Psoas muscle (tissue), 8 donors: ENCODE measurements at regions of chr4 and their contacts with region 1.

Region 1: GRCh38 chr4:128287871-128288688 is 467 bp upstream of the PGRMC2 start:
- DNase-seq: peak; percentile 99 to 100
- ATAC-seq: peak; percentile 91 to 94 (median 92)
- H3K4me3 ChIP-seq: peak overlapping the region; percentile 87
- H3K27ac ChIP-seq: peak overlapping the region; percentile 95
- H3K4me1 ChIP-seq: peaks cover 28% of the 10 kb centered on the region
- H3K27me3 ChIP-seq: no peaks in the 10 kb centered on the region
- CTCF ChIP-seq: peak; percentile 25

Region 2: DNA sequence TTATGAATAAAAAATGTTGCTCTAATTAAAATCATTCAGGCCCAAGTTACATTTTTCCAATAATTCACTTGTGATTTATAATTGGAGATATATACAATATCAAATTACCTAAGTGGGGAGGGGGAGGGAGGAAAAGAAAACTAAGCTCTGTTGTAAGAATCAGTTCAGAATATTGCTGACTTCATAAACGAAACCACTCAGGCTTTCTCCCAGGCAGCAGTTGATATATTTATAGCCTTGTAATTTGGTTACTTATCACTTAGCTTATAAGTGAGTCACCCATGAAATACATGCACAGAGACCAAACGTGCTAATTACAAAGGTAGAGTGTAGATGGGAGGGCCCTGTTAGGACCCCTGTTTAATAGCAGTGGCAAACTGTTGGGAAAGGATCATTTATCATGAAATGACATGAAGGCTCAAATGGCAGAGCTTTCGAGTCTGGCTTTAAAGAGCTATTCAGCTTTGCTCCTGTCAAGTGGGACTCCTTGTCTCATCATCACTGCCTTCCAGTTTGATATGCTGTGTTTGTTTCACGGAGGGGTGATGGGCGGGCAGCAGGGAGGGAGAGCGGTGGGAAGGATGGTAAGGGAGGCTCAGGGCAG is 105.1 kb after region 1 on chr4:
- intact Hi-C with region 1: loop called in 1 of 2 experiments (anchors 5 kb)
- DNase-seq: no peak
- ATAC-seq: peak; percentile 49 to 75 (median 64)
- H3K4me3 ChIP-seq: peak overlapping the region; percentile 17
- H3K27ac ChIP-seq: peak overlapping the region; percentile 84
- H3K4me1 ChIP-seq: peaks cover 59% of the 10 kb centered on the region
- H3K27me3 ChIP-seq: no peaks in the 10 kb centered on the region
- CTCF ChIP-seq: no peak

Region 3: DNA sequence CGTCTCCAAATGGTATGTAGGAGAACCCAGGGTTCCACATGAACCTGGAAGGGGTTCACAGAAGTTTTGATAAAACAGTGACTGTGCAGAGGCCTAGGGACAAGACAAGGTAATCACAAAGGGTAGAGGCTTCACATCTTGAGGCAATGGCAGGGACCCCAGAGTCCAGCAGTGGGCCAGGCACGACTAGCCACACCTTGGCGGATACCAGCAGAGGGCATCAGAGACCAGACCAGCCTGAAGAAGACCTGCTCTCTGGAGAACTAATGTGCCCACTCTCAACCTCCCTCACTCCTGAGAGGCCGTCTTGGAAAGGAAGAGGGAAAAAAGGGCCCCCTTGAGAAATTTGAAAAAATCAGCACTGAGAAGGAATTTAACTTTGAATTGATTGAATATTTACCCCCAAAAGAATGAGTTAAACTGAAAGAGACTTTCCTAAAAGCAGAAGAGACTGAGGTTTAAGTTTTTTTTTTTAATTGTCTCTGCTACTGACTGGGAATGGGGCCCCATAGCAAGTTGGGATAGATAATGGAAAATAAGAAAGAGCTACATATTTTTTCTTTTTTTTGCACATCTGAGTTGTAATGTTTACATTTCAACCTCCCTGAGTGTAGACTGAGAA is 277.6 kb after region 1 on chr4:
- intact Hi-C with region 1: loop called in 1 of 2 experiments (anchors 10 kb)
- DNase-seq: peak; percentile 30 to 56
- ATAC-seq: peak; percentile 58 to 80 (median 71)
- H3K4me3 ChIP-seq: no peak overlapping the region
- H3K27ac ChIP-seq: no peak overlapping the region
- H3K4me1 ChIP-seq: peaks cover 4% of the 10 kb centered on the region
- H3K27me3 ChIP-seq: no peaks in the 10 kb centered on the region
- CTCF ChIP-seq: peak; percentile 42

Region 4: GRCh38 chr4:128809477-128810330 is 521.6 kb after region 1 on chr4 and contains the start of gene JADE1:
- intact Hi-C with region 1: loop called in 1 of 2 experiments (anchors 10 kb)
- DNase-seq: peak; percentile 88 to 93
- ATAC-seq: peak; percentile 57 to 70 (median 66)
- H3K4me3 ChIP-seq: peak within 1 kb of the TSS; percentile 85
- H3K27ac ChIP-seq: peak within 1 kb of the TSS; percentile 97
- H3K4me1 ChIP-seq: peaks cover 8% of the 10 kb centered on the region
- H3K27me3 ChIP-seq: no peaks in the 10 kb centered on the region
- CTCF ChIP-seq: no peak
- total RNA-seq, gene JADE1: 16.8 to 21.4 (median 19.0) TPM

Region 5: DNA sequence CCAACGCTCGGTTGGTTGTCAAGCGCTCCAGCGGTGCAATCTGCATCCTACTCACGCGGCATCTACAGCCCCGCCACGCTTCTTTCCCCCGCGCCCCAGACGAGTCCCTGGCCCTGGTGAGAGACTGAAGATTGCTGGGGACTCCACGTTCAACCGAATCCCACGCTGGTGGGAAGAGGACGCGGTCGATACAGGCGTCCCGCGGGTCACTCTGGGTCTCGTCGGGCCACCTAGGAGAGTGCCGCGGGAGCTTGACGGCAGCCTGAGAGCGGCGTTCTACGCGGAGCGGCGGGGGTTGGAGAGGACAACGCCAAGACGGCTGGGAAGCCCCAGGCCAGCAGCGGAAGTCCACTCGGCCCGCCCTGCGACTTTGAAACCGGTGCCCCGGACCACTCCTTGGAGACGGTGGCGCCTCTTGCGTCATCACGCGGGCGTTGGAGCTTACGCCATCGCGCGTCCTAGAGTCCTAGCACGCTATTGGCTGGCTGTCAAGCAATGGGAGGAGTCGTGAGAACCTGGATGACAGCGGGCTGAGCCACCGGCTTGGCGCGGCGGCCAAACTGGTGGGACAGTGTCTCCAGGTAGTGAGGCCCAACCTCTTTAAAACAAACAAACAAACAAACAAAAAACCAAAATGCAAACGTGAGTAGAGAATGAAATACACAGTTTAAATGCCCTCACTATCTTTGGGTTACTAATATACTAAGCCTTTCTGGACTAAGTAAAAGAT is 805.3 kb after region 1 on chr4 and contains the start of gene SCLT1:
- intact Hi-C with region 1: loop called in 1 of 2 experiments (anchors 5 kb)
- DNase-seq: peak; percentile 99
- ATAC-seq: peak; percentile 98 to 99 (median 98)
- H3K4me3 ChIP-seq: peak within 1 kb of the TSS; percentile 84
- H3K27ac ChIP-seq: peak within 1 kb of the TSS; percentile 94
- H3K4me1 ChIP-seq: peaks cover 29% of the 10 kb centered on the region
- H3K27me3 ChIP-seq: no peaks in the 10 kb centered on the region
- CTCF ChIP-seq: no peak
- total RNA-seq, gene SCLT1: 3.1 to 5.3 (median 4.4) TPM